GM10248 (cell line): ENCODE measurements at regions of chr2 and their contacts with region 1.

Region 1: DNA sequence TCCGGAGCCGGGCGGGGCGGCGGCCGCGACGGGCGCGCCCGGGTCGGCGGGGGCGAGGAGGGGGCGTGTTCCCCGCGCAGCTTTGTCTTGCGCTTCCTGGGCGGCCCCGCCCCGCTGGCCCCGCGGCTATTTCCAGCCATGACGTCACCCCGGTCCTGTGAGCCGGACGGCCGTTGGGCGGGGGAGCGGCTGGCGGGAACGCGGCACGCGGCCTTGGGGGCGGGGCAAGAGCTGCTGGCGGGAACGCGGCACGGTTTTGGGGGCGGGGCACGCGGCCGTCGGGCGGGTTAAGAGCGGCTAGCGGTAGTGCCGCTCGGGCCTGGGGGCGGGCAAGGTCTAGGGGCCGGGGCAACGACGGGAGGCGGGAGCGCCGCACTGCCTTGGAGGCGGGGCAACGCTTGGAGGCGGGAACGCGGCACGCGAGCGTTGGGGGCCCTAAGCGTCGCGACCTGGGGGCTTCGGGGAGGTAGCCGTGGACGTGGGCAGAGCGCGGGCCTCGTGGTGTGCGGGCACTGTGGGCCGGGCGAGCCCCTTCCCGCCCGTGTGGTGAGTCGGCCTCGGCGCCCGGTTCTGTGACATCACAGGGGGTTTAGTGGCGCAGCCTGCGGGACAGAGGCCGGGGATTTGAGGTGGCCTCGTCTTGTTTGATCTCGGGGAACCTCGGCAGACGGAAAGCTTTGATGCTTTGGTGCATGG is 704 bp downstream of the KLF11 start:
- DNase-seq: peak; percentile 93
- CTCF ChIP-seq: no peak

Region 2: DNA sequence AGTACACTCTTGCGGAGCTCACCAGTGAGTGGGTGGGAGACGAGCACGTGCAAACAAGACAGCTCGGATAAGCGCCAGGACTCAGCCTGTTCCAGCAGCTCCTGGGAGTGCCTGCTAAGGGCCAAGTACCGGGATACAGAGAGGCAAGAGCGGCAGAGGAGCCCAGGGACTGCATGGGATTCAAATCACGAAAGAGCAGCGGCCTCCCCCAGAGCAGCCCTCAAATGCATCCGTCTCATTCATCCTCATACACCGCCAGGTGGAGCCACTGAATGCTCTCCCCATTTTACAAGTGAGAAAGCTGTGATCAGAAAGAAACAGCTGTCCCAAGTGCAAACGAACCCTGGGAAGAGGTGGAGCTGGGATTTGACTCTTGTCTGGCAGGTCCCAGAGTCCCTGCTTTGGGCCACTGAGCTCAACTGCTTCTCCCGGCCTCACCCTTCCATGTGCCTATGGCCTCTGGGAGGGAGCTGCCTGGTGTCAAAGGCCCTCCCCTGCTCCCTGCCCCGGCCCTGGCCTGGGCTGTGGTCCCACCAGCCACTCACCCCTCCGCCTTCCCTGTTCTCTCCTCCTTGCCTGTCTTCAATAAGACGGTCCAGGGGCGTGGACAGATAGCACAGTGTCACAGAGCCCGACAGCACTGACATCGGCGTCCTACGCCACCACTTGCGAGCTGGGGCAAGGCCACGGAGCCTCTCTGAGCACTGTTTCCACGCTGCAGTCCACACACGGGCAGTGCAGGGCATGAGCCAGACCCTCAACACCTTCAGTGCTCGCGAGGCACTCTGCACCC is 273.6 kb before region 1 on chr2:
- CTCF ChIA-PET with region 1: interaction called, 21 read pairs
- POLR2A ChIA-PET with region 1: no interaction called
- DNase-seq: peak; percentile 73
- CTCF ChIP-seq: peak; percentile 70

Region 3: GRCh38 chr2:9990735-9991134 is 53.3 kb before region 1 on chr2:
- CTCF ChIA-PET with region 1: interaction called, 87 read pairs
- POLR2A ChIA-PET with region 1: no interaction called
- DNase-seq: no peak
- CTCF ChIP-seq: no peak

Region 4: DNA sequence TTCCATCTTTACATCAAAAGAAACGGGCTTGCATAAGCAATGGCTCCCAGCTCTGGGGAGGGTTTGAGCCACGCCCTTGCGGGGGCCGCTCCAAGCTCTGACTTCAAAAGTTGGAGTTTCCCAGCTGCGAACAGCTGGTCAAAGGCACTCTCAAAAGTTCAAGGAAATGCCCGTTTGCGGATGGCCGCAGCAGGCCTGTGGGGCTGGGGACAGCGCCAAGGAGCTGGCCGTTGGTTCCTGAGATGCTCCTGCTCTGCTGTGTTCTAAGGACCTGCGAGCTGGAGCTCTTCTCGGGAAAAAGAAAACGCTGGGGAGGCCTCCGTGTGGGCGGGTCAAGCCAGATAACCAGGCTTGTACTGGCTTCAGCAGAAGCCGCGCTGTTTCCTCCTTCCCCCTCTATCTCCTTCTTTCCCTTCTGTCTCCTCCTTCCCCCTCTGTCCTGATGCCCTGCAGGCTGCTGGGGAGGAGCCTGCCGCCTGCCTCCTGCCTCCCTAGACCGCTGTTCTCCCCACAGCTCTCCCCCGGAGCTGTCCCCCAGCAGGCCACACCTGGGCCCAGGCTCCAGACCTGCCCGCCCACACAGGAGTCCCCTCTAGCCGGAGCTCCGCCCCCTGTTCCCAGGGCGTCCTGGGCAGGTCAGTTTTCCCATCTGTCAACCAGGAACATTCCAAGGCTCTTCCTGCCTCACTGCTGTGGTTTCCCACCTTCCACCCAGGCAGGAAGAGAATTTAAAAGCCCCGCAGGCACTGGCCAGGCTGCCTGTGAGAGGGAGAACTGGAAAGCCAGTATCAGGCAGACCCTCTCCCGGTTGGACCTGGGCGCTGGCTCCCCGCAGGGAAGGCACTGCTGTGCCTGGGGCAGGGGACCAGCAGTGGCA is 13.4 kb after region 1 on chr2:
- CTCF ChIA-PET with region 1: interaction called, 40 read pairs
- POLR2A ChIA-PET with region 1: no interaction called
- DNase-seq: peak; percentile 65
- CTCF ChIP-seq: no peak